Calu3 (cell line): ENCODE measurements at regions of chr6 and their contacts with region 1.

Region 1: GRCh38 chr6:52839119-52840055 is 1.2 kb downstream of the GSTA5 start:
- DNase-seq: peak; percentile 73
- H3K4me3 Mint-ChIP-seq: peak overlapping the region; percentile 43
- H3K27ac Mint-ChIP-seq: no peak overlapping the region
- H3K4me1 Mint-ChIP-seq: no peaks in the 10 kb centered on the region
- H3K27me3 Mint-ChIP-seq: peaks cover 38% of the 10 kb centered on the region
- CTCF ChIP-seq: peak; percentile 69

Region 2: GRCh38 chr6:52399511-52400312 is 439.7 kb before region 1 on chr6:
- CTCF ChIA-PET with region 1: no interaction called
- intact Hi-C with region 1: no loop called
- DNase-seq: peak; percentile 45
- H3K4me3 Mint-ChIP-seq: no peak overlapping the region
- H3K27ac Mint-ChIP-seq: no peak overlapping the region
- H3K4me1 Mint-ChIP-seq: peaks cover 36% of the 10 kb centered on the region
- H3K27me3 Mint-ChIP-seq: no peaks in the 10 kb centered on the region
- CTCF ChIP-seq: peak; percentile 71

Region 3: DNA sequence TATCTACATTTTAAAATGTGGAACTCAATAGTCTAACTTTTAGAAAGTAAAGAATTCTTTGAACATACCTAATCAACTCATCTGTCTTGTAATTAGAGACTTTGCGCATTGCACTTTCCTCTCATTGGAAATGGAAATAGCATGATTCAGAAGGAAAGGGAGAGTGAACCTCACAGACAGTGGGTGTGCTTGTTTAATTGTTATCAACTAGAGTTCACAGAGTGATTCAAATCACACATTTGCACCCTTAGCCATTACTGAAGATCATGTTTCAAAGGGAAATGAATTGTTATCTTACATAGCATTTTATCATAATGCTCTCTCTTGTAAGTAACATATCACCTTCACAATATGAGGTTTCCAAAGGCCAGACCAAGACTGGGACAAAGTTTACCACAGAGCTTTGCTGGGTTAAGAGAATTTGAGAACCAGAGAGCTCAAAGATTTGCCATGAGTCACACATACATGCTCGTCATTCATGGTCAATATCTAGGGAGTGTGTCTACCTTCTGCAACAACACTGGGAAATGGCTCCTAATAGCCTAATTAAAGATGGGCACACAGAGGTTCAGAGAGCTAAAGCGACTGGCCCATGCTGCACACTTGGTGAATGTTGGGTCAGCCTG is 48.6 kb after region 1 on chr6:
- CTCF ChIA-PET with region 1: no interaction called
- intact Hi-C with region 1: no loop called
- DNase-seq: no peak
- H3K4me3 Mint-ChIP-seq: no peak overlapping the region
- H3K27ac Mint-ChIP-seq: no peak overlapping the region
- H3K4me1 Mint-ChIP-seq: no peaks in the 10 kb centered on the region
- H3K27me3 Mint-ChIP-seq: peaks cover 13% of the 10 kb centered on the region
- CTCF ChIP-seq: no peak

Region 4: GRCh38 chr6:53048431-53049195 is 209.2 kb after region 1 on chr6:
- CTCF ChIA-PET with region 1: interaction called, 11 read pairs
- intact Hi-C with region 1: no loop called
- DNase-seq: no peak
- H3K4me3 Mint-ChIP-seq: no peak overlapping the region
- H3K27ac Mint-ChIP-seq: no peak overlapping the region
- H3K4me1 Mint-ChIP-seq: peaks cover 21% of the 10 kb centered on the region
- H3K27me3 Mint-ChIP-seq: no peaks in the 10 kb centered on the region
- CTCF ChIP-seq: no peak